ENCODE measurements at regions of chr10 and their contacts with region 1.

Region 1: GRCh38 chr10:73886085-73886529 is 11.8 kb upstream of the CAMK2G start:
- DNase-seq: peak; percentile 59 to 71
- ATAC-seq: peak; percentile 87

Region 2: DNA sequence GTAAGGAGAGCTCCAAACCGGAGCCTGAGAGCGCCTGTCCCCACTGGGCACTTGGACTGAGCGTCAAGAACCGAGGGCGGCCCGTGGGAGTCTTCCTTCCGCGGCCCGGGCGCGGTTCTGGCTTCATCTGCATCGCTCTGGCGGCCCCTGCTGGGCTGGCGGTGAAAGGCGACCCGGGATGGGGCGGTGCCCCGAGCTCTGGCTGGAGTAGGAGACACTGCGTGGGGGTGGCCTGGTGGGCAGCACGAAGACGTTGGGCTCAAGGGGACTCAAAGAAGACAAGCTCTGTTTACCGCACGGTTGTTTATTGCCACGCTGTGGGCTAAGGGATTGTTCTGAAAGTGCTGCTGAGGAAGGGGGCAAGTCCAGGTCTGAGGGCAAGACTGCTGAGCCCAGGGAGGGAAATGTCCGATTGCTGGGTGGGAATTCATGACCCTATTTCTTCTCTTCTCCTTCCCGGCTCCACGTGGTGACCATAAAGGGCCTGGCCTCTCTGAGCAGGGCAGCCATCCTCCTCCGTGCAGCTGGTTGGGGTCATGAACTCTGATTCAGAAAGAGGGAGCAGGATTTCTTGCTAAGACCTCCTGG is 54.6 kb after region 1 on chr10:
- intact Hi-C with region 1: loop called (anchors 5 kb)
- DNase-seq: peak; percentile 69 to 90
- ATAC-seq: peak; percentile 98

Region 3: GRCh38 chr10:73956476-73957359 is 70.6 kb after region 1 on chr10:
- intact Hi-C with region 1: no loop called
- DNase-seq: peak in 1 of 2 donors; percentile 21
- ATAC-seq: peak; percentile 77

Region 4: DNA sequence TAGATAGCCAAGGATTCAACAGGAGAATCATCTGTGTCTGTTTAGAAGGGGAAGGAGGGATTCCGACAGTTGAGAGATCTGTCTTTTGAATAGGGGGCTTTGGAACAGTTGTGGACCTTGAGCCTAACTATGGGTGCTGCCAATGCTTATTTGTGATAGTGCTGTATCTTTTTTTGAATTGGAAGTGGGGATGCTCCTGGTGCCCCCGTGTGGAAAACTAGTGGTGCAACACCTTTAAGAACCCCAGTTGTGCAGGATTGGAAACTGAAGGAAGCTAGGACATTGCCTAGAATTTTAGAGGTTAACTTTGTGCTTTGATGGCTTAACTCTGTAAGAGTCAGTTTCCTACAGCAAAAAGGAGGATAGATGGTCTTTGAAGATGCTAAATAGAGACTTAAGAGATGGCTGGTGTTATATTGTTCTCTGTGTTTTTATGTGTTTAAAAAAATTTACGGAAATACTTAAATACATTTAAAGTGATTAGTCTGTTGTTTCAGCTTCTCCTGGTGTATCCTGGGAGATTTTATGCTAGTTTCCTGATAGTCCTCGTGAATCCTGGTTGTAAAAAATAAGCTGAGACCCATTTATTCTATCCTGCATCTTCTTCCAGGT is 195.2 kb after region 1 on chr10:
- intact Hi-C with region 1: loop called in 1 of 2 experiments (anchors 5 kb)
- DNase-seq: peak in 1 of 2 donors; percentile 20
- ATAC-seq: peak; percentile 72

Measured in left colon (tissue), 2 donors.